Head of caudate nucleus (tissue), 42 donors: ENCODE measurements at regions of chr12 and their contacts with region 1.

Region 1: GRCh38 chr12:132614861-132615578 is 3.6 kb upstream of the P2RX2 start:
- DNase-seq: peak; percentile 73 to 95 (median 86)

Region 2: DNA sequence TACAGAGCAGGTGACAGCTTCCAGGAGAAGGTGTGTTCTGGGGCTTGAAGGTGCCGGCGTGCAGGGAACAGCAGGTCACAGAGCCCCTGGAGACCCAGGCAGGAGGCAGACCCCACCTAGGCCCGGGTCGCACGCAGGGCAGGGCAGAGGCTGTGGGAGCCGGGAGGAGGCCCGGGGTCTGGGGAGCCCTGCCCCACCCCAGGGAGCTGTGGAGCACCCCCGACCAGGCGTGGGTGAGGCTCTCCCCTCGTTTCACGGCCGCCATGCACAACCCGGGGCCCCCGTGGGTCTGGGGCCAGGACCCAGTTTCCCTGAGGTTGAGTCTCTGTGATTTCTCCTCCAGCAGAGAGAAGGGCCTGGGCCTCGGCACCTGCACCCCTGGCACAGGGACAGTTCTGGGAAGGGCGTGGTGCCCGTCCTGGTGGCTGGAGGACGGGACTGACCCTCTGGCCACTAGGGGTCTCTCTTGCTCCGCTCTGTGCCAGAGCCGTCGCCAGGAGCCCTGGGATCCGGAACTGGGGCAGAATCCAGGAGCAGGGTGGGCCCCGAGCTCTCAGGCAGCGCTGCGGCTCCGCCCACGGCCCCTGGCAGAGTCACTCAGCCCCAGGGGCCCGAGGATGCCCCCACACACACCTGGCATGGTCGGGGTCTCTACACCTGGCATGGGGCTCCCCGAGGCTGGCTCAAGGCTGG is 200.2 kb before region 1 on chr12:
- intact Hi-C with region 1: loop called (anchors 5 kb)
- DNase-seq: peak; percentile 21 to 90 (median 76)